ENCODE measurements at regions of chr13 and their contacts with region 1.

Region 1: DNA sequence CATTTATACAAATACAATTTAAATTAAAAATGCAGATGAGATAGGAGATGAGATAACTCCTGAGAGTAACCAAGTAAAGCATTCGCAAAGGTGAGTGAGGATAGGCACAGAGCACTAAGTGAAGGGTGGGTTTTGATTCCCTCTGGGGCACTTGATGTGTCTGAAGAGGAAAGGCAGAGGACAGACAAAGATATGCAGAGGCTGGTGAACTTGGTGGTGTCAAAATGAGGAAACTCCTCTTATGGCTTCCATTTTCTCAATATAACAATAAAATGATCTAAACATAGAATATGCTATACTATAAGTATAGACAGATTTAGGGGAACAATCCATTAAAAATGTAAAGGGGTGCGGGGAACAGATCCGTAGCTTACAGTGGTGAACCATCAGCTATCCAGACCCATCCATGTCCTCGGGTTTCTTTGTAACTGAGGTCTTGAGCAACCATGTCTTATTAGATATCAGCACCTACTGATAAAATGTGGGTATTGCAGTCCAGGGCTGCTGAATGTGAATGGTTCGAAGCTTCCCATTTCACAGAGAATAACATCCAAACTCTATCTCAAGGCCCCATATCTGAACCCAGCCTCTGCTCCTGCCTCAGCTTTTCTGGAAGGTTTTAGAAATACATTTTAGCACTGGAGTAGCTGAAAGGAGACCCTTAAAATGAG is 73.9 kb upstream of the SLC10A2 start:
- DNase-seq: no peak
- ATAC-seq: peak in 3 of 4 donors; percentile 62 to 76 (median 70)
- H3K4me3 ChIP-seq: no peak overlapping the region
- H3K27ac ChIP-seq: no peak overlapping the region
- H3K4me1 ChIP-seq: no peaks in the 10 kb centered on the region
- H3K27me3 ChIP-seq: no peaks in the 10 kb centered on the region
- CTCF ChIP-seq: peak in 3 of 4 donors; percentile 25 to 43 (median 27)

Region 2: GRCh38 chr13:102847272-102848234 is 292.6 kb before region 1 on chr13:
- intact Hi-C with region 1: no loop called
- DNase-seq: no peak
- ATAC-seq: peak in 2 of 4 donors; percentile 12 to 26
- H3K4me3 ChIP-seq: peak overlapping the region in 3 of 4 donors; percentile 76 to 93 (median 91)
- H3K27ac ChIP-seq: peak overlapping the region in 2 of 4 donors; percentile 20 to 99
- H3K4me1 ChIP-seq: peaks cover 0 to 11% (median 11%) of the 10 kb centered on the region in 3 donors
- H3K27me3 ChIP-seq: no peaks in the 10 kb centered on the region
- CTCF ChIP-seq: peak in 3 of 4 donors; percentile 43 to 47 (median 46)

Region 3: DNA sequence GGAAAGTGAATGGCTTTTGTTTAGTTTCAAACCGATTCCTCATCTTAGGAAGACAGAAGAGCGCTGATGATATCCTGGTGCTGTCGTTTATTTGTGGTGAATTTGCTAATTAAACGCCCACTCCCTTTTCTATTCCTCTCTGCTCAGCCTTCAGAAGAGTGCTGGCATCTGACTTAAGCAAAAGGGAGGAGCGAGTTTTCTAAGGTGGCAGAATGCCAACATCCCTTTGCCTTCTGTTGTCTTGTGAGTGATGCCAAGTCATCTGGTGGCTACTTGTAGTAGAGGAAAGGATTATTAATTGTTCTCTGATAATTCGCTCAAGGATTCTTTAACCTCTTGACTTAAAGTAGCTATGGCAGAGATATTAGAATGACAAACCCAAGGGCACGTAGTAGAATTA is 226.2 kb before region 1 on chr13:
- intact Hi-C with region 1: loop called in 1 of 3 experiments (anchors 10 kb)
- DNase-seq: no peak
- ATAC-seq: no peak
- H3K4me3 ChIP-seq: no peak overlapping the region
- H3K27ac ChIP-seq: no peak overlapping the region
- H3K4me1 ChIP-seq: no peaks in the 10 kb centered on the region
- H3K27me3 ChIP-seq: no peaks in the 10 kb centered on the region
- CTCF ChIP-seq: no peak

Region 4: DNA sequence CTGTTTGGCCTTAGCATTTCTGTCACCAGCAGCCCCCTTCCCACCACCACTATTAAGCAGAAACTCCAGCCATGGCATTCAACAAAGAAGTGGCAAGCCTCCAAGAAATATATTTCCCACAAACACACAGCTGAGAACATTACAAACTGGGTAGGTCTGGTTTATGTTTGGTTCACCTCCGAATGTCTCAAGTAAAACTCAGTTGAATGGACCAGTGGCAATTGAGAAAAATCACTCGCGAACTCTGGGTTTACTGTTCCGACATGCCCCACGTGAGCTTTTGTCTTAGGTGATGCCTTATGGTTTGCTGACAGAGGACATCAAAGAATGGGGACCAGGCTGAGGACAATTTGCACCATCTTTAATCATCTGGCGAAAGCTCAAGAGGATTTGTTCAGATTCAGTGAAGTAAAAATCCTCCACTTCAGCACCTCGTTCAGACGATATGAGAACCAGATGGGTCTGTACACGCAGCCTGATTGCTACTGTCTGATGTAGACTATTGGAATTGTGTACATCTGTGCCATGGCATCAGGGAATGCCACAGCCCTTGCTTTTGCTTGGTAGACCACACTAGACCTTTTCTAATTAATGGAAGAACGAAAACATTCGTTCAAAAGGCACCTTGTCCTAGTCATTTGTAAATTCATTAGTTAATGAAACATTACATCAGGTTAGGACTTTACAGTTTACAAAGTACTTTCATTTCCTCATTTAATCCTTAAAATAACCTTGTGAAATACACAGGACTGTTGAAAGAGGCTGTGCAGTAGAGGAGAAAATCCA is 133.3 kb before region 1 on chr13:
- intact Hi-C with region 1: no loop called
- DNase-seq: no peak
- ATAC-seq: no peak
- H3K4me3 ChIP-seq: no peak overlapping the region
- H3K27ac ChIP-seq: no peak overlapping the region
- H3K4me1 ChIP-seq: no peaks in the 10 kb centered on the region
- H3K27me3 ChIP-seq: no peaks in the 10 kb centered on the region
- CTCF ChIP-seq: no peak

Region 5: GRCh38 chr13:103299079-103299478 is 158.9 kb after region 1 on chr13:
- intact Hi-C with region 1: no loop called
- DNase-seq: peak in 1 of 6 donors; percentile 22
- ATAC-seq: no peak
- H3K4me3 ChIP-seq: no peak overlapping the region
- H3K27ac ChIP-seq: no peak overlapping the region
- H3K4me1 ChIP-seq: no peaks in the 10 kb centered on the region
- H3K27me3 ChIP-seq: no peaks in the 10 kb centered on the region
- CTCF ChIP-seq: no peak

Region 6: GRCh38 chr13:104106705-104107393 is 966.7 kb after region 1 on chr13:
- intact Hi-C with region 1: no loop called
- DNase-seq: no peak
- ATAC-seq: peak; percentile 67 to 83 (median 71)
- H3K4me3 ChIP-seq: no peak overlapping the region
- H3K27ac ChIP-seq: peak overlapping the region; percentile 55 to 85 (median 77)
- H3K4me1 ChIP-seq: peaks cover 17 to 32% (median 32%) of the 10 kb centered on the region in 3 donors
- H3K27me3 ChIP-seq: no peaks in the 10 kb centered on the region
- CTCF ChIP-seq: no peak